Natural killer cell (primary cell): ENCODE measurements at regions of chr3 and their contacts with region 1.

Region 1: GRCh38 chr3:108662130-108662738 is 72.7 kb downstream of the DZIP3 start:
- DNase-seq: peak in 1 of 2 donors; percentile 89
- ATAC-seq: peak; percentile 85 to 93 (median 90)
- H3K4me3 ChIP-seq: no peak overlapping the region
- H3K4me3 Mint-ChIP-seq: no peak overlapping the region
- H3K27ac ChIP-seq: no peak overlapping the region
- H3K27ac Mint-ChIP-seq: no peak overlapping the region
- H3K4me1 ChIP-seq: no peaks in the 10 kb centered on the region
- H3K4me1 Mint-ChIP-seq: peaks cover 8 to 12% of the 10 kb centered on the region in 2 donors
- H3K27me3 ChIP-seq: no peaks in the 10 kb centered on the region
- H3K27me3 Mint-ChIP-seq: no peaks in the 10 kb centered on the region
- CTCF ChIP-seq: peak; percentile 86

Region 2: GRCh38 chr3:108818404-108818803 is 156.2 kb after region 1 on chr3:
- intact Hi-C with region 1: loop called (anchors 1 kb)
- DNase-seq: peak; percentile 16 to 83
- ATAC-seq: peak; percentile 67 to 97 (median 97)
- H3K4me3 ChIP-seq: no peak overlapping the region
- H3K4me3 Mint-ChIP-seq: no peak overlapping the region
- H3K27ac ChIP-seq: no peak overlapping the region
- H3K27ac Mint-ChIP-seq: peak overlapping the region in 1 of 2 donors; percentile 5
- H3K4me1 ChIP-seq: no peaks in the 10 kb centered on the region
- H3K4me1 Mint-ChIP-seq: peaks cover 15 to 17% of the 10 kb centered on the region in 2 donors
- H3K27me3 ChIP-seq: no peaks in the 10 kb centered on the region
- H3K27me3 Mint-ChIP-seq: peaks cover 0 to 11% of the 10 kb centered on the region in 2 donors
- CTCF ChIP-seq: peak; percentile 53

Region 3: GRCh38 chr3:108914774-108915641 is 252.8 kb after region 1 on chr3:
- intact Hi-C with region 1: loop called (anchors 1 kb)
- DNase-seq: peak; percentile 21 to 88
- ATAC-seq: peak; percentile 77 to 92 (median 81)
- H3K4me3 ChIP-seq: no peak overlapping the region
- H3K4me3 Mint-ChIP-seq: no peak overlapping the region
- H3K27ac ChIP-seq: no peak overlapping the region
- H3K27ac Mint-ChIP-seq: no peak overlapping the region
- H3K4me1 ChIP-seq: peaks cover 3% of the 10 kb centered on the region
- H3K4me1 Mint-ChIP-seq: peaks cover 4 to 5% of the 10 kb centered on the region in 2 donors
- H3K27me3 ChIP-seq: no peaks in the 10 kb centered on the region
- H3K27me3 Mint-ChIP-seq: peaks cover 30 to 34% of the 10 kb centered on the region in 2 donors
- CTCF ChIP-seq: peak; percentile 92